Breast epithelium (tissue), 4 donors: ENCODE measurements at regions of chr15 and their contacts with region 1.

Region 1: GRCh38 chr15:52455412-52455811 is 73.3 kb downstream of the MYO5A start:
- DNase-seq: no peak
- H3K4me3 ChIP-seq: no peak overlapping the region
- H3K27ac ChIP-seq: no peak overlapping the region
- H3K4me1 ChIP-seq: no peaks in the 10 kb centered on the region
- H3K27me3 ChIP-seq: no peaks in the 10 kb centered on the region
- CTCF ChIP-seq: no peak
- POLR2A ChIP-seq: no peak

Region 2: DNA sequence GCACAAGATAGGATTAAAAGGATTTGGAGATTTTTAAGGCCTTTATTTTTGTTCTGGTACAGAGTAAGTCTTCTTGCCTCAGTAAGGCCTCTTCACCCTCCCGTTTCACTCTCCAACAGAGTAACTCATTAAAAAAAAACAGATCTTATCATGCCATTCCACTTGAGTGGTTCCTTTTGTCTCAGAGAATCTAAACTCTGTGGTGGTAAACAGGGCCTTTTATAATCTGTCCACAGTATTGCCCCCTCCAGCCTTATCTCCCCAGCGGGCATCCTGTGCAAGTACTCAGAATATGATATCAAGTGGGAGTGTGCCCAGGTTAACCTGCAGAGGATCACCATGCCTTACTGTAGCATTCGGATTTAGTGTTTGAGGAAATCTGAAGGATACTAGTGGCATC is 244.0 kb after region 1 on chr15:
- intact Hi-C with region 1: loop called (anchors 5 kb)
- DNase-seq: no peak
- H3K4me3 ChIP-seq: no peak overlapping the region
- H3K27ac ChIP-seq: no peak overlapping the region
- H3K4me1 ChIP-seq: no peaks in the 10 kb centered on the region
- H3K27me3 ChIP-seq: no peaks in the 10 kb centered on the region
- CTCF ChIP-seq: no peak
- POLR2A ChIP-seq: no peak